Aorta (tissue), 5 donors: ENCODE measurements at regions of chr6 and their contacts with region 1.

Region 1: DNA sequence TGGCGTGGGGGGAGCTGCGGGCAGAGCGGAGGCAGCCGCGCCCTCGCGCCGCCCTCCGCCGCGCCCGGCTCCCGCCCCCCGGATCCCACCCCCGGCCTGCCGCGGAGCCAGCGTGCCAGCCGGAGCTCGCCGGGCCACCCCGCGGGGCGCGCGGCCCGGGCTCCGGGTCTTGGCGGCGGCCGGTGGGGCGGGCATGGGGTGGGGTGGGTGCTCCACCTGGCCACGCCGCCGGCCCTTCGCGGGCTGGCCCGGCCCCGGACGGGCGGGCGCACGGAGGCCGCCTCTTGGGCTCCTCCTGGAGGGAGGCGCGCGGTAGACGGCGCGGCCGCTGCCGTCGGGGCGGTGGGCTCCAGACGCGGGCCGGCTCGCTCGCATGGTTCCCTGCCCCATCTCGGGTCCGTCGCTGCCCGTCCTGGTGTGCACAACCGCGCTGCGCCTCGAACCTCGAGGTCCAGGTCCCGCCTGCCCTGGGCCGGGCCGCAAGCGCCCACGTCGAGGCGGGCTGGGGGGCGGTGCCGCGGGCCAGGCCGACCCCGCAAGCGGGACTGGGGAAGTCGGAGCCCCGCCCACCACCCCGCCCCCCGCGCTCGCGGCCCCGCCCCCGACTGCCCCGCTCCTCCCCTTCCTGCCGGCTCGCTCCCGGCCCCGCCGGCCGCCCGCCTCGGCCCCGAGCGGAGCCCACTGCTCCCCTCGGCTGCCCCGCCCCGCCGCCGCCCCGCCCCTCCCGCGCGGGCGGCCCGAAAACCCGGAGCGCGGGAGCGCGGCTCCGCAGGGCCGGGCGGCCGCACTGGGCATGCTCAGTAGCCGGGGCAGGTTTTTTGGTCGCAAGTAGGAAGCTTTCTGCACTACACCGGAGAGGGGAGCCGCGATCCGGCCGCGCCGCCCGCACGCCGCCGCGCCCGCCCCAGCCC is at the start of gene CDYL:
- DNase-seq: peak; percentile 92 to 95
- ATAC-seq: peak; percentile 93
- H3K4me3 ChIP-seq: peak within 1 kb of the TSS; percentile 91 to 99
- H3K27ac ChIP-seq: peak within 1 kb of the TSS; percentile 3 to 96
- H3K4me1 ChIP-seq: peaks cover 4 to 5% of the 10 kb centered on the region in 2 donors
- H3K27me3 ChIP-seq: no peaks in the 10 kb centered on the region
- total RNA-seq, gene CDYL: 42.9 to 44.2 TPM

Region 2: DNA sequence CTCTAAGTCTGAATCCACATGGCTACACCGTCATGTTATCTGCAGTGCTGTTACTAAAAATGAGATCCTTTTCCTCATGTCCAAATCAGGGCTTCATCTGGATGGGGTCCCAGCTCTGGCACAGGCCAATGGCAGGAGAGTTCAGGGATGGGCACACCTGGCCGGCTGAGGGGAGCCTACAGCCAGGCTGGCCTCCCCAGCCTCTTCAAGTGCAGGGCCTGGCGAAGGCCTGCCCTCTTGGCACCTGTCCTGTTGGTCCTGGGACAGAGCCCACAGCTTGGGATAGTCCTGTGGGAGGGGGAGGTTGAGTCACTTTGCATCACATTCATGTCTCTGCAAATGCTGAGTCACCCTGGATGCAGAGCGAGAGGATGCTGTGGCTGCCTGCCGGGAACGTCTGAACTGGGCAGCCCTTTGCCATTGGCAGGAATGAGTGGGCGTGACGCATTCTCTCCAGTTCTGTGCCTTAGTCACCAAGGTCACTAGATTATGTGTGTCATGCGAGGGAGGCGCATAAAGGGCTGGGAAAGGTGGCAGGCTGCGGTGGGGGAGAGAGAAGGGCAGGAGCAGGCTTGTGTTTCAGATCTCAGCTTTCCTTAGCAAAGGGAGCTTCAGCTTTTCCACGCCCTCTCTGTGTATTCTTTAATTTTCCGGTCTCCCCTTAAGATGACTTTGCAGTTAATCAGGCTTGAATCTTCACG is 417.3 kb before region 1 on chr6:
- intact Hi-C with region 1: loop called in 1 of 2 experiments (anchors 10 kb)
- DNase-seq: peak; percentile 95 to 97
- ATAC-seq: peak; percentile 96
- H3K4me3 ChIP-seq: no peak overlapping the region
- H3K27ac ChIP-seq: peak overlapping the region; percentile 37 to 99
- H3K4me1 ChIP-seq: no peaks in the 10 kb centered on the region
- H3K27me3 ChIP-seq: no peaks in the 10 kb centered on the region

Region 3: GRCh38 chr6:4647414-4648365 is 128.1 kb before region 1 on chr6:
- intact Hi-C with region 1: loop called in 1 of 2 experiments (anchors 1 kb)
- DNase-seq: peak; percentile 84 to 91
- ATAC-seq: peak; percentile 92
- H3K4me3 ChIP-seq: peak overlapping the region in 1 of 2 donors; percentile 57
- H3K27ac ChIP-seq: peak overlapping the region in 1 of 2 donors; percentile 20
- H3K4me1 ChIP-seq: no peaks in the 10 kb centered on the region
- H3K27me3 ChIP-seq: no peaks in the 10 kb centered on the region

Region 4: GRCh38 chr6:5025911-5026819 is 250.3 kb after region 1 on chr6:
- intact Hi-C with region 1: loop called in 1 of 2 experiments (anchors 5 kb)
- DNase-seq: peak; percentile 77 to 87
- ATAC-seq: peak; percentile 87
- H3K4me3 ChIP-seq: peak overlapping the region; percentile 48 to 96
- H3K27ac ChIP-seq: peak overlapping the region in 1 of 2 donors; percentile 69
- H3K4me1 ChIP-seq: no peaks in the 10 kb centered on the region
- H3K27me3 ChIP-seq: no peaks in the 10 kb centered on the region

Region 5: GRCh38 chr6:6505111-6505510 is 1729.3 kb after region 1 on chr6:
- intact Hi-C with region 1: no loop called
- DNase-seq: no peak
- ATAC-seq: no peak
- H3K4me3 ChIP-seq: no peak overlapping the region
- H3K27ac ChIP-seq: no peak overlapping the region
- H3K4me1 ChIP-seq: no peaks in the 10 kb centered on the region
- H3K27me3 ChIP-seq: no peaks in the 10 kb centered on the region